ENCODE measurements at regions of chr4 and their contacts with region 1.

Region 1: DNA sequence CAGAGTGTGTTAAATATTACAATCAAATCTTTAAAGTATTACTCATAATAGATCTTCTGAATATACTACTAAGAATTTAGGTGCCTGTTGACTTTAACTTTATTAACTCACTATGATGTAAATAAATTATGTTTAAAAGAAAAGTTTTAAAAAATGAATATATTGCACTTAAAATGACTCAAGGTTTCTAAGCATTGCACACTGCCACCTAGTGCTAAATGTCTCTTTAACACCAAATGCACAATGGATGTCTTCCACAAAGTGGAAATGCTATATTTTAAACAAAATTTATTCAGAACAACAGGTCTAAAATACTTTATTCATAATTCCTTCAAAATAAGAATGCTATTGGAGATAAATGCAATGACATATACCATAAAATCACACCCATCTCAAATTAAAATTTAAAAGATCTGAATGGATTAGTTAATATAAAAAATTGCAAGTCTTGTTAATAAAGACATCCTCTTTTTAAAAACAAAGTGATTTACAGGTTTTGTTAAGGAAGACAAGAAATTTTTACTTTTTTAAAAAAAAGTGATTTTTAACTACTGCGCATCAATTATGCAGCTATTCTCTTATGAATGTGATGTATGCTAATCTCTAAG is 5.5 kb downstream of the INPP4B start:
- DNase-seq: no peak
- ATAC-seq: no peak

Region 2: DNA sequence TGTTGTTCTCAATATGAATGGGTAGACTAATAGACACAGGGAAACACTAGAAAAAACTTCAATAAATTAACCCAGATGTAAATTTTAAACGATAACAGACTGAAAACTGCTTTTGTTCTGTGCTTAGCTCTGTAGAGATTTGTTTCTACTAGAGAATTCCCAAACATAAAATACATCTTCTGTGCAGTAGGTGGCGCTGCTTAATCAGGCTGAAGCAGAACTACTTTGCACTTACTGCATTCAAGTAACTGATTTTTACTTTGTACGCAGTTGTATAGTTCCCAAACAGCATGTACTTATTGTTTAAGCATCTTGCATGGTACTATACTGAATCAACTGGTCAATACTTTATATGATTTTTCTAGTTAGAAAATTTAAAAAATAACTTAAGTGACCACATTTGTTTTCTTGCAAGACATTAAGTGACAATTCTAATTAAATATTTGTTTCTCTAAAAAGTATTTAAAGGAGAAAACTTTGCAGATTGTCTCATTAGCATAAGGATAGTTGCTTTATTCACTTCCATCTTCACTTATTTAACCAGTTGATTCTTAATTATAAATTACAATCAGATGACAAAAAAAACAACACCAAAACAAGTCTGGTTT is 713.6 kb before region 1 on chr4:
- intact Hi-C with region 1: loop called in 1 of 2 experiments (anchors 5 kb)
- DNase-seq: peak; percentile 40
- ATAC-seq: peak; percentile 38 to 62

Region 3: DNA sequence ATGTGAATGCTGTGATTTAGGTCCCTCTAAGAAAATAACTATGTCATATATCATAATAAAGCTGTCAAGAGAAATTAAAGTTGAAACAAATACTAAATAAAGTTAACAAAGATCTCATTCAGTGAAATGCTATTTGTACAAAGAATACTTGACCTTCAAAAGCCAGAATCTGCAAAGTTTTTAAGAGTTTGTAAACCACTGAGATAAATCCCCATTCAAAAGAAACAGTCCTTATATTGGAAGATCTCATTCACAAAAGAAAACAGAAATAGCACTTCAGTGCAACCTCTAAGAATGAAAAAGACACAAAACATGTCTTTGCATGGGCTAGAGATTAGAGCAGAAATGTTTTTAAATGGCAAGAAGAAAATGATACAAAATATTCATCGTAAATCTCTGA is 195.0 kb after region 1 on chr4:
- intact Hi-C with region 1: no loop called
- DNase-seq: no peak
- ATAC-seq: no peak

Measured in left cardiac atrium (tissue), 4 donors.